ENCODE measurements at regions of chr7 and their contacts with region 1.

Region 1: GRCh38 chr7:99918959-99919813 is at the start of gene TRIM4:
- DNase-seq: peak; percentile 93
- H3K4me3 Mint-ChIP-seq: peak within 1 kb of the TSS; percentile 95
- H3K27ac Mint-ChIP-seq: peak within 1 kb of the TSS; percentile 96
- H3K4me1 Mint-ChIP-seq: peaks cover 35% of the 10 kb centered on the region
- H3K27me3 Mint-ChIP-seq: no peaks in the 10 kb centered on the region
- CTCF ChIP-seq: no peak
- total RNA-seq, gene TRIM4: 28.1 and 28.2 TPM in 2 replicates

Region 2: DNA sequence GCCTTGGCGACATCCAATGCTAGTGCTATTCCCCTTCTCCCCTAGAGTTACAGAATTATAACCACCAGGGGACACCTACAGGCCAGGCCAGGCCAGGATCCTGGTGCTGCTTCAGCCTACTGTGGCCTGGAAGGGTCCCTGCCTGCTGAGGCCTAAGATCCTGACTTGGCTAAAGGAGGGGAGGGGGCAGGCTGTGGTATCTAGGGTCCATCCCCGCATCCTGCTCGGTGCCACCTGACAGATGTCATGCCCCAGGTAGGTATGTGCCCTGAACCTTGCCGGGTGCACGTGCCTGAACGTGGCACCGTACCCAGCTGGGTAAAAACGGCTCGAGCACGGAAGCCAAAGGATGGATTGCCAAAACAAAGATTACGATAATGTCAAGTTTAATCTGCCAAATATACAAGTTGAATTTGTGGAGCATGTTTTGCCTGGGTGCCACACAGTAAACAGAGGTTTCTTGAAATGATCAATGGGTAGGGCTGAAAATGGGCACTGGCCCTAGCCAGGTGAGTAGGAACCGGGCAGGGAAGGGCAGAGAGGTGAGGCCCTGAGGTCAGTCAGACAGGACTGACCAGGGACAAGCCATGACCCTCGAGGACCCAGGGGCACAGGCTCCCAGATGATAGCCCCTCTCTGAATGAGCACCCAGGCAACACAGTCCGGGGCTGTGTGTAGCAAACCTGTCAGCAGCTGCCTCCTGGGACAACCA is 523.4 kb before region 1 on chr7:
- CTCF ChIA-PET with region 1: no interaction called
- POLR2A ChIA-PET with region 1: no interaction called
- intact Hi-C with region 1: no loop called
- DNase-seq: no peak
- H3K4me3 Mint-ChIP-seq: no peak overlapping the region
- H3K27ac Mint-ChIP-seq: no peak overlapping the region
- H3K4me1 Mint-ChIP-seq: no peaks in the 10 kb centered on the region
- H3K27me3 Mint-ChIP-seq: no peaks in the 10 kb centered on the region
- CTCF ChIP-seq: no peak

Region 3: DNA sequence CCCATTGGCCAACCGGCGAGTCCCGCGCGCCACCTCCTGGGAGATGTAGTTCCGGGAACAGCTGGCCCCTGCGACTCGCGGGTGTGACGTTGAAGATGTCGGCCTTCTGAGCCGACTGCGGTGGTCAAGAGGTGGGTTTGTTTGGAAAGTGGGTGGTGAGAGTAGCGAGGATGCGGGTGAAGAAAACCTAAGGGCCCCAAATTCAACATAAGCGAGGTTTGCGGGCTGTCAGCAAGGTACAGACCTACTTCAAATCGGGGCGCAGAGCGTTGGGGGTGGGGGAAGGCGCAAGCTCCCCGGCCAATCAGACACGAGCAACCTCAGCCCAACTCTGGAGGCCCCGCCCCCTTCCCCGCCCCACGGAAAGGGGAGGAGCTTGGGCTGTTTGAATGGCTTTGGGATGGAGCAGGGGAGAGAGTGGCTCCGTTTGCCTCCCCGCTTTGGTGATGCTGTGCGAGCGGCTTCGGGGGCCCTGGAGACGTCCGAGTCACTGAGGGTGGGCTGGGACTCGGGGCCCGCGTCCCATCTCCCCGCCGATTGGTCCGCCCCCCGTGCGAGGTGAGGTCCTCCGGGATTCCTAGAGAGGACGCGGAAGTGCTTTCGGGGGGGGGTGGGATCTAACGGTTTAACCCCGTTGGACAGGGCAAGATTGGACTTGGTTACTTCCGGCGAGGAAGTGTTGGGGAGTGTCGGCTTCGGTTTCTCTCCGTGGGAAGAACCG is 414.4 kb before region 1 on chr7 and contains the start of gene ZKSCAN5:
- CTCF ChIA-PET with region 1: no interaction called
- POLR2A ChIA-PET with region 1: interaction called, 13 read pairs
- intact Hi-C with region 1: no loop called
- DNase-seq: peak; percentile 96
- H3K4me3 Mint-ChIP-seq: peak within 1 kb of the TSS; percentile 87
- H3K27ac Mint-ChIP-seq: peak within 1 kb of the TSS; percentile 83
- H3K4me1 Mint-ChIP-seq: peaks cover 17% of the 10 kb centered on the region
- H3K27me3 Mint-ChIP-seq: no peaks in the 10 kb centered on the region
- CTCF ChIP-seq: no peak
- total RNA-seq, gene ZKSCAN5: 13.6 and 16.2 TPM in 2 replicates

Region 4: GRCh38 chr7:99616359-99617191 is 302.6 kb before region 1 on chr7 and contains the start of gene ZSCAN25:
- CTCF ChIA-PET with region 1: no interaction called
- POLR2A ChIA-PET with region 1: interaction called, 10 read pairs
- intact Hi-C with region 1: no loop called
- DNase-seq: peak; percentile 91
- H3K4me3 Mint-ChIP-seq: peak within 1 kb of the TSS; percentile 90
- H3K27ac Mint-ChIP-seq: peak within 1 kb of the TSS; percentile 93
- H3K4me1 Mint-ChIP-seq: peaks cover 24% of the 10 kb centered on the region
- H3K27me3 Mint-ChIP-seq: no peaks in the 10 kb centered on the region
- CTCF ChIP-seq: no peak
- total RNA-seq, gene ZSCAN25: 17.6 and 20.9 TPM in 2 replicates

Region 5: GRCh38 chr7:99901581-99902200 is 17.5 kb before region 1 on chr7:
- CTCF ChIA-PET with region 1: interaction called, 3 read pairs
- POLR2A ChIA-PET with region 1: interaction called, 11 read pairs
- intact Hi-C with region 1: no loop called
- DNase-seq: no peak
- H3K4me3 Mint-ChIP-seq: no peak overlapping the region
- H3K27ac Mint-ChIP-seq: no peak overlapping the region
- H3K4me1 Mint-ChIP-seq: peaks cover 6% of the 10 kb centered on the region
- H3K27me3 Mint-ChIP-seq: no peaks in the 10 kb centered on the region
- CTCF ChIP-seq: no peak

Region 6: DNA sequence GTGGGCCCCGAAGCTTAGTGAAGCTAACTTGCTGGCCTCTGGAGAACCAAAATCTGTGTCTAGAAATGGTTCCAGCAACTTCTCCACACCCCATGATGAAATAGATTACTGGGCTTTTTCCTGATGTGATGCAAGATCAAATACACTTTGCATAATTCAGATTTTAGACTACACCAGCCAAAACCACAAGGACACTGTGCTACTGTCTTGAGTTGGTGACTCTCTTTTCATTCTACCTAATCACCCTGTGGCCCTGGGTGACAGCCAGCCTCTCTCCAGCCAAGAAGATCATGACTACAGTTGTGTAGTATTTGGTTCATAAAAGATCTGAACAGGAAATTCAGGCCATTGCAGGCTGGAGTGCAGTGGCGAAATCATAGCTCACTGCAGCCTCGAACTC is 34.5 kb after region 1 on chr7:
- CTCF ChIA-PET with region 1: interaction called, 8 read pairs
- POLR2A ChIA-PET with region 1: interaction called, 13 read pairs
- intact Hi-C with region 1: no loop called
- DNase-seq: peak; percentile 88
- H3K4me3 Mint-ChIP-seq: no peak overlapping the region
- H3K27ac Mint-ChIP-seq: peak overlapping the region; percentile 46
- H3K4me1 Mint-ChIP-seq: peaks cover 41% of the 10 kb centered on the region
- H3K27me3 Mint-ChIP-seq: peaks cover 13% of the 10 kb centered on the region
- CTCF ChIP-seq: no peak

Region 7: GRCh38 chr7:99990460-99990852 is 71.3 kb after region 1 on chr7:
- CTCF ChIA-PET with region 1: interaction called, 214 read pairs
- POLR2A ChIA-PET with region 1: interaction called, 21 read pairs
- intact Hi-C with region 1: no loop called
- DNase-seq: no peak
- H3K4me3 Mint-ChIP-seq: no peak overlapping the region
- H3K27ac Mint-ChIP-seq: no peak overlapping the region
- H3K4me1 Mint-ChIP-seq: no peaks in the 10 kb centered on the region
- H3K27me3 Mint-ChIP-seq: no peaks in the 10 kb centered on the region
- CTCF ChIP-seq: no peak

Region 8: GRCh38 chr7:100049441-100050311 is 130.5 kb after region 1 on chr7 and contains the start of gene ZSCAN21:
- CTCF ChIA-PET with region 1: interaction called, 3 read pairs
- POLR2A ChIA-PET with region 1: interaction called, 6 read pairs
- intact Hi-C with region 1: loop called (anchors 10 kb)
- DNase-seq: peak; percentile 73
- H3K4me3 Mint-ChIP-seq: peak within 1 kb of the TSS; percentile 82
- H3K27ac Mint-ChIP-seq: peak within 1 kb of the TSS; percentile 91
- H3K4me1 Mint-ChIP-seq: peaks cover 10% of the 10 kb centered on the region
- H3K27me3 Mint-ChIP-seq: no peaks in the 10 kb centered on the region
- CTCF ChIP-seq: peak; percentile 12
- total RNA-seq, gene ZSCAN21: 13.8 and 14.7 TPM in 2 replicates